Posterior vena cava (tissue), 2 donors: ENCODE measurements at regions of chr10 and their contacts with region 1.

Region 1: DNA sequence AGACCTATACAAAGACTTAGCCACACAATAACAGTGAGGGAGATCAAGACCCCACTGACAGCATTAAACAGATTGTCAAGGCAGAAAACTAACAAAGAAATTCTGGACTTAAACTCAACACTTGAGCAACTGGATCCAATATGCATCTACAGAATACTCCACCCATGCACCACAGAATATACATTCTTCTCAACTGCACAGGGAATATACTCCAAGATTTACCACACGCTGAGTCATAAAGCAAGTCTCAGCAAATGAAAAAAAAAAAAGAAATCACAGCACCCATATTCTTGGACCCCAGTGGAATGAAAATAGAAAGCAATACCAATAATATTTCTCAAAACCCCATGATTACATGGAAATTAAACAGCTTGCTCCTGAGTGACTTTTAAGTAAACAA is 680.2 kb downstream of the PCDH15 start:
- DNase-seq: no peak

Region 2: DNA sequence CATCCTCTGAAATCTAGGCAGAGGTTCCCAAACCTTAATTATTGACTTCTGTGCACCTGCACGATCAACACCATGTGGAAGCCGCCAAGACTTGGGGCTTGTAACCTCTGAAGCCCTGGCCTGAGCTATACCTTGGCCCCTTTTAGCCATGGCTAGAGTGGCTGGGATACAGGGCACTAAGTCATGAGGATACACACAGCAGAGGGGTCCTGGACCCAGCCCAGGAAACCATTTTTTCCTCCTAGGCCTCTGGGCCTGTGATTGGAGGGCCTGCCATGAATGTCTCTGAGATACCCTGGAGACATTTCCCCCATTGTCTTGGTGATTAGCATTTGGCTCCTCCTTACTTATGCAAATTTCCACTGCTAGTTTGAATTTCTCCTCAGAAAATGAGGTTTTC is 63.4 kb before region 1 on chr10:
- intact Hi-C with region 1: loop called in 1 of 2 experiments (anchors 2 kb)
- DNase-seq: no peak